Heart right ventricle (tissue), 16 donors: ENCODE measurements at regions of chr6 and their contacts with region 1.

Region 1: DNA sequence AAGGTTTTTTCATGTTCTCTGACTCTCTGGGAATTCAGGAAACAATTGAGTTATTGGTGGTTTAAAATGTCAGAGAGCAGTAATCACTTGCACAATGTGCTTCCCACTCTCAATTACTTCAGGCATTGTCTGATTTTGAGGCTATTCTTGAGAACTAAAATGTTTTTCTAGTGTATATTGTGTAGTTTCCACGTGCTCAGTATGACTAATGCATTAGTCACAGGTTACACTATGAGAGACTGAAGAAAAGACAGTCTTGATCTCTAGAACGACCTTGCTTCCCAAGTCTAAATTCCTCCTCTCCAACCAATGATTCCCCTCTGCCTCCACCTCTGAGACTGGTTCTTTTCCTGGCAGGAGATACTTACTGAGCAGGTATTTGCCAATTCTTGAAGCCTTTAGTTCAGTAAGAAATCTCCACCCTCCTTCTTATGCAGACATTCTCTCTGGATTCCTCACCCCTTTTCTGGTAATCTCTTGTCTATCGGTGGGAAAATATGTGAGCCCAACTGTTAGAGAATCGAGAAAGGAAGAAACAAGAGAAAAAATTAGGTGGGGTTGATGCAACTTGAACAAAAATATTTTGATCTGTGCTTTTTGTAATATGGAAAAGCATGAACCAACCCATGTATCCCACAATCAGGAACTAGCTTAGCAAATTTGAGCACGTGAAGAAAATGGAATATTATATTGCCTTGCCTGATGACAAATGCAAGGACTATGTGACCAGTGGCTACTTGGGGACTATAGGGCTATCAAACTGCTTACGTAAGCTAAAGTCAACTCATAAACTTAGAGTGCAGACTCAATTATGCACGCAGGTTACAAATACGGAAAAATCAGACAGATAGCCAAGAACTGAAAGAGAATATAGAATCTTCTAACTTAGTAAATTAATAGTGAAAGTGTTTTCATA is 61.1 kb upstream of the SLC22A16 start:
- DNase-seq: no peak
- ATAC-seq: peak in 5 of 8 donors; percentile 50 to 79 (median 70)
- H3K4me3 ChIP-seq: no peak overlapping the region
- H3K27ac ChIP-seq: peak overlapping the region in 7 of 10 donors; percentile 14 to 57 (median 47)
- H3K4me1 ChIP-seq: peaks cover 0 to 25% (median 10%) of the 10 kb centered on the region in 9 donors
- H3K27me3 ChIP-seq: no peaks in the 10 kb centered on the region
- CTCF ChIP-seq: no peak

Region 2: DNA sequence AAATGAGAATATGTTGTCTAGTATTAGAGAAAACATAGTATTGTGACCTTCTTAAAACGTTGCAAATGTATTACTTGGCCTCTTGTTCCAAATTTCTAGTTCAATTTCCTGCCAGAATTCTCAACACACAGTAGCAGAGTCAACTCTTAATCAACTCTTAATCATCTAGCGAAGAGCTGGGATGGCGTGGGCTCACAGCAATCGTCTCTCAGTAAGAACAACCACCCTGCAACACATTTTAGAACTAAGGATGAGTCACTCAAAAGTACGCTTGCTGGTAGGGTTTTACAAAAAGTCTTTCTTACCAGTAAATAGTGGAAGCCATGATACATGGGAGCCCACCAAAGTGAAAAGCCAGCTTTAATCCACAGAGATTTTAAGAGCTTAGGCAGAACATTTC is 534.8 kb before region 1 on chr6:
- intact Hi-C with region 1: no loop called
- DNase-seq: no peak
- ATAC-seq: no peak
- H3K4me3 ChIP-seq: no peak overlapping the region
- H3K27ac ChIP-seq: no peak overlapping the region
- H3K4me1 ChIP-seq: no peaks in the 10 kb centered on the region
- H3K27me3 ChIP-seq: peaks cover 0 to 22% (median 8%) of the 10 kb centered on the region in 7 donors
- CTCF ChIP-seq: no peak

Region 3: GRCh38 chr6:110656492-110656891 is 119.0 kb after region 1 on chr6:
- intact Hi-C with region 1: loop called in 1 of 10 experiments (anchors 10 kb)
- DNase-seq: no peak
- ATAC-seq: no peak
- H3K4me3 ChIP-seq: no peak overlapping the region
- H3K27ac ChIP-seq: no peak overlapping the region
- H3K4me1 ChIP-seq: peaks cover 0 to 19% (median 0%) of the 10 kb centered on the region in 9 donors
- H3K27me3 ChIP-seq: no peaks in the 10 kb centered on the region
- CTCF ChIP-seq: no peak

Region 4: DNA sequence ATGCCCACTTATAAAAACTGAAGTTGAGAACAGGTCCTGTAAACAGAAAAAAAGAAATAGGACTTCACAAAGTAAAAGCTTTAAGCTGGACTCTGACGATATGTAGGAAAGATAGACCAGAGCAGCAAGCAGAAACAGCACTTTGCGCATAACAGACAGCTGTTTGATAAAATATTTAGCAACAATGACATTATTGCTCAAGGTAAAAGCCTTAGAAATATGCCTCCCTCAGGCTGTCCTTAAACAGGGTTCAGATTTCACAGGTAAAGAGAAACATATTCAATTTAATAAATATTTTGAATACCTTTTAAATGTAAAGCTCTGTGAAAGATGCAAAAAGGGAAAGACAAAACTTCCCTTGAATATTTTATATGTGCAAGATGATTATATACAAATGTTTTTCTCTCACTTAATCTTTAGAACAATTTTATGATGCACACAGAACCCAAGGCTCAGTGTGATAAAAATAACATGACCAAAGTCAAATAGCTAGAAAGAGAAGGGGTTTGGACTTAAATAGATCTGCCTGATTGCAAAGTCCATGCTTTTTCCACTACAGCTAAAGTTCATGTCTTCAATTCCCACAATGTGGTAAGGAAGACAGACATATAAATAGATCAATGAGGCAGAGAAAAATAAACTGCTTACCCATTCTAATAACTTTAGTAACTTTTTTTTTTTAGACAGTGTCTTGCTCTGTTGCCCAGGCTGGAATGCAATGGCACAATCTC is 133.8 kb after region 1 on chr6:
- intact Hi-C with region 1: loop called in 1 of 10 experiments (anchors 10 kb)
- DNase-seq: no peak
- ATAC-seq: no peak
- H3K4me3 ChIP-seq: no peak overlapping the region
- H3K27ac ChIP-seq: no peak overlapping the region
- H3K4me1 ChIP-seq: peaks cover 0 to 17% (median 0%) of the 10 kb centered on the region in 9 donors
- H3K27me3 ChIP-seq: no peaks in the 10 kb centered on the region
- CTCF ChIP-seq: no peak

Region 5: GRCh38 chr6:110688661-110689268 is 151.3 kb after region 1 on chr6:
- intact Hi-C with region 1: loop called in 3 of 10 experiments (anchors 5 to 10 kb)
- DNase-seq: no peak
- ATAC-seq: peak in 1 of 8 donors; percentile 31
- H3K4me3 ChIP-seq: no peak overlapping the region
- H3K27ac ChIP-seq: no peak overlapping the region
- H3K4me1 ChIP-seq: peaks cover 0 to 27% (median 5%) of the 10 kb centered on the region in 9 donors
- H3K27me3 ChIP-seq: no peaks in the 10 kb centered on the region
- CTCF ChIP-seq: no peak

Region 6: DNA sequence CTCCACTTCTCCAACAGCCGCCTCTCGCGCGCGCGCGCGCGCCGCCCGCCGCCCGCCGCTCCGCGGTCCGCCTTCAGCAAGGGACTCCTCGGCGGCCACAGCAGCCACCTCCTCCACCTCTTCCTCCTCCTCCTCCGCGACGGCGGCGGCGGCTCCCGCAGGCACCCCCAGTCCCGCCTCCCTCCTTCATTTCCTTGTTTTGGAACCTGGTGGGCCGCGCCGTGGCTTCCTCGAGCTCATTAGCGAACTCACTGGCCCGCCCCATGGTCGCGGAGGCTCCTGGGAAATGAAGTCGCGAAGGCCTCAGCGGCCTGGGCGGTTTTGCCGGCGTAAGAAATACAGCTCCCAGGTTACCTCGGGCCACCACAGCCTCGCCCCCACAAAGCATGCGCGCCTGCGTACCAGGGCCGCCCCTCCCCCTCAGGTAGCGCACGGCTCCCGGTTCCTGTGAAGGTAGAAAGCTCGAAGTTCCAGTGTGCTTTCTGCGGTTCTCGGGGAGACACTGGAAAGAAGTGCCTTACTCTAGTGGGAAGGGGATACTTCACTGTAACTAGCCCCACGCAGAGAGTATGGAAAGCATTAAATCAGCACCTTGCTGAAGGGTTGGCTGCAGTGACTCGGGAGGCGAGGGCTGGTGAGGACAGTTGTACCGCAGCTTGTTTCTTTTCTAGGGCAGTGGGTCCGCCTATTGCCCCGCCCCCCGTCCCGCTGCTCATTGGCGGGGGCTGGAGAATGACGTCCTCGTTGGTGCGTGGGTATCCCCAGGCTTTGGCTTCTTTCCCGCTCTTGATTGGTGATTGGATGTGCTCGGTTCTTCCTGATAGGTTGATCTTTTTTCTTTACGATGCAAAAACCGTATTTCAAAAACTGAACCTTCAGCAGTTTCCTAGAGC is 278.0 kb after region 1 on chr6 and contains the start of gene CDK19:
- intact Hi-C with region 1: loop called in 3 of 10 experiments (anchors 5 to 10 kb)
- DNase-seq: peak; percentile 97 to 98
- ATAC-seq: peak; percentile 96 to 99 (median 98)
- H3K4me3 ChIP-seq: peak within 1 kb of the TSS; percentile 70 to 97 (median 88)
- H3K27ac ChIP-seq: peak within 1 kb of the TSS; percentile 87 to 96 (median 94)
- H3K4me1 ChIP-seq: peaks cover 0 to 45% (median 16%) of the 10 kb centered on the region in 9 donors
- H3K27me3 ChIP-seq: no peaks in the 10 kb centered on the region
- CTCF ChIP-seq: no peak
- total RNA-seq, gene CDK19: 4.6 to 13.0 (median 8.7) TPM

Region 7: GRCh38 chr6:110949679-110950285 is 412.3 kb after region 1 on chr6:
- intact Hi-C with region 1: loop called in 1 of 10 experiments (anchors 5 kb)
- DNase-seq: no peak
- ATAC-seq: peak in 1 of 8 donors; percentile 19
- H3K4me3 ChIP-seq: no peak overlapping the region
- H3K27ac ChIP-seq: no peak overlapping the region
- H3K4me1 ChIP-seq: peaks cover 0 to 10% (median 0%) of the 10 kb centered on the region in 9 donors
- H3K27me3 ChIP-seq: no peaks in the 10 kb centered on the region
- CTCF ChIP-seq: peak; percentile 19 to 70 (median 56)

Region 8: GRCh38 chr6:110981202-110981600 is 443.7 kb after region 1 on chr6:
- intact Hi-C with region 1: loop called in 1 of 10 experiments (anchors 10 kb)
- DNase-seq: no peak
- ATAC-seq: peak in 3 of 8 donors; percentile 2 to 16 (median 9)
- H3K4me3 ChIP-seq: peak overlapping the region; percentile 77 to 94 (median 82)
- H3K27ac ChIP-seq: peak overlapping the region in 9 of 10 donors; percentile 87 to 96 (median 93)
- H3K4me1 ChIP-seq: peaks cover 0 to 21% (median 13%) of the 10 kb centered on the region in 9 donors
- H3K27me3 ChIP-seq: no peaks in the 10 kb centered on the region
- CTCF ChIP-seq: no peak